ENCODE measurements at regions of chr20 and their contacts with region 1.

Region 1: GRCh38 chr20:45293041-45294002 is 13.3 kb upstream of the RBPJL start:
- DNase-seq: peak; percentile 90 to 95
- H3K4me3 ChIP-seq: peak overlapping the region; percentile 63
- H3K4me3 Mint-ChIP-seq: peak overlapping the region; percentile 72
- H3K27ac Mint-ChIP-seq: no peak overlapping the region
- H3K4me1 ChIP-seq: 0 out of 2 replicates have a peak, but pooled peaks cover 3% of the 10 kb centered on the region
- H3K4me1 Mint-ChIP-seq: no peaks in the 10 kb centered on the region
- H3K27me3 ChIP-seq: peaks cover 4% of the 10 kb centered on the region; the same call in 1 of the 2 replicates
- H3K27me3 Mint-ChIP-seq: peaks cover 13% of the 10 kb centered on the region
- CTCF ChIP-seq: peak; percentile 100

Region 2: DNA sequence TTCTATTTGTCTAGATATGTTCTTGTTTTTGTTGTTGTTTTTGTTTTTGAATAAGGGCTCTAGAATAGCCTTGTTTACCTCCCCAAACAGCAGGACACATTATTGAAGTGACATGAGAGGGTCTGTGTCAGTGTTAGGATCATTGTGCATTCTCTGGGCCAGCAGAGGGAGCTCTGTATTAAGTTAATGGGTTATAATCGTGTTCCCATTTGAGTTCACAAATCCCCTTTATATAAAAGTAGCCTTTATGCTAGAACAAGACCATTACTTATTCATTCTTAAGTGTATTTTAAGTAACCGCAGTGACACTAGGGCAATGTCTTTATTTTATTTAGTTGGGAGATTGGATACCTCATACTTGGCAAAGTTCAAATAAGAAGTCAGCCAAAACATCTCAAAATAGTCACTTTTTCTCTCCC is 282.2 kb before region 1 on chr20:
- CTCF ChIA-PET with region 1: interaction called, 6 read pairs
- POLR2A ChIA-PET with region 1: no interaction called
- intact Hi-C with region 1: loop called (anchors 1 kb)
- DNase-seq: peak; percentile 70 to 80
- H3K4me3 ChIP-seq: no peak overlapping the region
- H3K4me3 Mint-ChIP-seq: no peak overlapping the region
- H3K27ac Mint-ChIP-seq: peak overlapping the region; percentile 1
- H3K4me1 ChIP-seq: peaks cover 44% of the 10 kb centered on the region
- H3K4me1 Mint-ChIP-seq: peaks cover 40% of the 10 kb centered on the region
- H3K27me3 ChIP-seq: no peaks in the 10 kb centered on the region
- H3K27me3 Mint-ChIP-seq: no peaks in the 10 kb centered on the region
- CTCF ChIP-seq: peak; percentile 89 to 96

Region 3: DNA sequence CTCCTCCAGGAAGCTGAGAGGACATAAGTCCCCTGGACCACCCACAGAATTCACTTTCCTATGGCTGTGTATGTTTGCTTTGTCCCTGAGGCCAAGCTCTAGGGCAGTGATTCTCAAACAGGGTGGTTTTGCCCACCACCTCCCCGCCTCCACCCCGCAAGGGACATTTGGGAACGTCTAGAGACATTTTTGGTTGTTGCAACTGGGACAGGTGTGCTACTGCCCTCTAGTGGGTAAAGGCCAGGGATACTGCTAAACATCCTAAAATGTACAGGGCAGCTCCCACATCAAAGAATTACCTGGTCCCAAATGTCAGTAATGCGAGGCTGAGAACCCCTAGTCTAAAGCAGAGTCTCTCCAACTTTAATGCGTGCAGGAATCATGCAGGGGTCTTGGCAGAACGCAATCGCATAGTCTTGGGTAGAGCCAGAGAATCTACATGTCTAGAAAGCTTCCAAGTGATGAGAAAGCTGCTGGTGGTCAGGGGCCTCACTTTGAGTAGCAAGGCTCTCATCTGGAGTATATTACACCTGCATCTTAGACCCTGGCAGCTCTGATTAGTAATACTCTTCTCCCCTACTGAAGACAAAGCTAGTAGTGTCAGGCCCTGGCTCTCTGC is 197.5 kb before region 1 on chr20:
- CTCF ChIA-PET with region 1: interaction called, 18 read pairs
- POLR2A ChIA-PET with region 1: no interaction called
- intact Hi-C with region 1: loop called (anchors 1 kb)
- DNase-seq: peak; percentile 84 to 87
- H3K4me3 ChIP-seq: no peak overlapping the region
- H3K4me3 Mint-ChIP-seq: no peak overlapping the region
- H3K27ac Mint-ChIP-seq: no peak overlapping the region
- H3K4me1 ChIP-seq: no peaks in the 10 kb centered on the region
- H3K4me1 Mint-ChIP-seq: no peaks in the 10 kb centered on the region
- H3K27me3 ChIP-seq: no peaks in the 10 kb centered on the region
- H3K27me3 Mint-ChIP-seq: no peaks in the 10 kb centered on the region
- CTCF ChIP-seq: peak; percentile 95 to 99

Region 4: GRCh38 chr20:45235995-45236394 is 57.3 kb before region 1 on chr20:
- CTCF ChIA-PET with region 1: interaction called, 5 read pairs
- POLR2A ChIA-PET with region 1: no interaction called
- intact Hi-C with region 1: loop called (anchors 2 kb)
- DNase-seq: peak; percentile 46 to 55
- H3K4me3 ChIP-seq: no peak overlapping the region
- H3K4me3 Mint-ChIP-seq: no peak overlapping the region
- H3K27ac Mint-ChIP-seq: no peak overlapping the region
- H3K4me1 ChIP-seq: no peaks in the 10 kb centered on the region
- H3K4me1 Mint-ChIP-seq: no peaks in the 10 kb centered on the region
- H3K27me3 ChIP-seq: no peaks in the 10 kb centered on the region
- H3K27me3 Mint-ChIP-seq: peaks cover 32% of the 10 kb centered on the region
- CTCF ChIP-seq: peak; percentile 65 to 90

Region 5: GRCh38 chr20:45246109-45246508 is 47.2 kb before region 1 on chr20:
- CTCF ChIA-PET with region 1: no interaction called
- POLR2A ChIA-PET with region 1: no interaction called
- intact Hi-C with region 1: no loop called
- DNase-seq: no peak
- H3K4me3 ChIP-seq: no peak overlapping the region
- H3K4me3 Mint-ChIP-seq: no peak overlapping the region
- H3K27ac Mint-ChIP-seq: no peak overlapping the region
- H3K4me1 ChIP-seq: no peaks in the 10 kb centered on the region
- H3K4me1 Mint-ChIP-seq: no peaks in the 10 kb centered on the region
- H3K27me3 ChIP-seq: no peaks in the 10 kb centered on the region
- H3K27me3 Mint-ChIP-seq: peaks cover 32% of the 10 kb centered on the region
- CTCF ChIP-seq: no peak

Region 6: GRCh38 chr20:45322952-45323383 is 29.6 kb after region 1 on chr20:
- CTCF ChIA-PET with region 1: interaction called, 10 read pairs
- POLR2A ChIA-PET with region 1: no interaction called
- intact Hi-C with region 1: no loop called
- DNase-seq: peak; percentile 84 to 86
- H3K4me3 ChIP-seq: no peak overlapping the region
- H3K4me3 Mint-ChIP-seq: no peak overlapping the region
- H3K27ac Mint-ChIP-seq: peak overlapping the region; percentile 3
- H3K4me1 ChIP-seq: peaks cover 8% of the 10 kb centered on the region; the same call in 1 of the 2 replicates
- H3K4me1 Mint-ChIP-seq: no peaks in the 10 kb centered on the region
- H3K27me3 ChIP-seq: no peaks in the 10 kb centered on the region
- H3K27me3 Mint-ChIP-seq: no peaks in the 10 kb centered on the region
- CTCF ChIP-seq: peak; percentile 55 to 79

Region 7: GRCh38 chr20:45362804-45363610 is 69.7 kb after region 1 on chr20 and contains the start of gene SYS1:
- CTCF ChIA-PET with region 1: interaction called, 13 read pairs
- POLR2A ChIA-PET with region 1: interaction called, 4 read pairs
- intact Hi-C with region 1: no loop called
- DNase-seq: peak; percentile 100
- H3K4me3 ChIP-seq: peak within 1 kb of the TSS; percentile 93
- H3K4me3 Mint-ChIP-seq: peak within 1 kb of the TSS; percentile 87
- H3K27ac Mint-ChIP-seq: peak within 1 kb of the TSS; percentile 91
- H3K4me1 ChIP-seq: peaks cover 46% of the 10 kb centered on the region
- H3K4me1 Mint-ChIP-seq: peaks cover 46% of the 10 kb centered on the region
- H3K27me3 ChIP-seq: no peaks in the 10 kb centered on the region
- H3K27me3 Mint-ChIP-seq: no peaks in the 10 kb centered on the region
- CTCF ChIP-seq: peak; percentile 98
- total RNA-seq, gene SYS1: 62.1 and 67.1 TPM in 2 replicates